ENCODE measurements at regions of chr6 and their contacts with region 1.

Region 1: DNA sequence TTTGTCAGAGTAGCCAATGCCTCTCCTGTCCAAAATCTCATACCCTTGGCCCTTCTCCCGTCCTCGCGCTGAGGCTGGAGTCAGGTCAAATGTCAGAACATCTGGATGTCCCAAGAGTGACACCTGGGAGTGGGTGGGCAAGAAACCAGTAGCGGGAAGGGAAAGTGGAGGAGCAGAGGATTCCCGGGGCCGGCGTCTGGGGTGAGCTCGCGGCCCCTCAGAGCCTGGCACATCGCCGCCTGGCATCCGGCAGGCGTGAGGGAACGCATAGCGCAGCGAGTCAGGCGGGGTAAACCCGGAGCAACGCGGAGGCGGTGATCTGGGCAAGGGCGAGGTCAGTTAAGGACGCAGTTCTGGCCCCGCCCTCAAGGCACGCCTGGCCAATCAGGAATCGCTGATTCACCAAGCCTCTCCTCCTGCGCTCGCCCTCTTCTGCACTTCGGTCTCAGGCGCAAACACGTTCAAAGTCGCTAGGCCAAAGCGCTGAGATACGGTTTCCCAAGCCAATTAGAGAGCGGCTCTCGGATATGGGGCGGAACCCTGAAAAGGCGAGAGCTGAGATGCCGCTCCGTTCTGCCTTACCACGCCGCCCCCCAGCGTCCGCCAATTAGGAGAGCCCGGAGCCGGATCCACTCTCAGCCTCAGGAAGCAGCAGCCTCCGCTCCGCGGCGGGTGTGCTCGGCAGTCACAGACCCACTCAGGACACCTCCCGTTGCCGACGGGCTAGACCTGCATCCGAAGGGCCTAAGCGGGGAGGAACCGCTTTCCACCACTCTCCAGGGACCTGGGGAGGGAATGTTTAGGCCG is 22.5 kb downstream of the VPS52 start:
- DNase-seq: peak; percentile 100
- H3K4me3 ChIP-seq: peak overlapping the region; percentile 18 to 69 (median 38)
- H3K27ac ChIP-seq: peak overlapping the region; percentile 72
- H3K4me1 ChIP-seq: peaks cover 23% of the 10 kb centered on the region
- H3K27me3 ChIP-seq: peaks cover 0 to 2% of the 10 kb centered on the region in 2 experiments
- CTCF ChIP-seq: peak in 1 of 2 donors; percentile 21
- POLR2A ChIP-seq: peak; percentile 93

Region 2: GRCh38 chr6:32971581-32972352 is 277.4 kb before region 1 on chr6:
- CTCF ChIA-PET with region 1: interaction called, 6 read pairs
- POLR2A ChIA-PET with region 1: interaction called, 12 read pairs
- dilution Hi-C with region 1: no loop called
- intact Hi-C with region 1: no loop called
- DNase-seq: peak; percentile 100
- H3K4me3 ChIP-seq: peak overlapping the region; percentile 83 to 96 (median 91)
- H3K27ac ChIP-seq: peak overlapping the region; percentile 99
- H3K4me1 ChIP-seq: peaks cover 29% of the 10 kb centered on the region
- H3K27me3 ChIP-seq: no peaks in the 10 kb centered on the region
- CTCF ChIP-seq: no peak
- POLR2A ChIP-seq: peak; percentile 100

Region 3: DNA sequence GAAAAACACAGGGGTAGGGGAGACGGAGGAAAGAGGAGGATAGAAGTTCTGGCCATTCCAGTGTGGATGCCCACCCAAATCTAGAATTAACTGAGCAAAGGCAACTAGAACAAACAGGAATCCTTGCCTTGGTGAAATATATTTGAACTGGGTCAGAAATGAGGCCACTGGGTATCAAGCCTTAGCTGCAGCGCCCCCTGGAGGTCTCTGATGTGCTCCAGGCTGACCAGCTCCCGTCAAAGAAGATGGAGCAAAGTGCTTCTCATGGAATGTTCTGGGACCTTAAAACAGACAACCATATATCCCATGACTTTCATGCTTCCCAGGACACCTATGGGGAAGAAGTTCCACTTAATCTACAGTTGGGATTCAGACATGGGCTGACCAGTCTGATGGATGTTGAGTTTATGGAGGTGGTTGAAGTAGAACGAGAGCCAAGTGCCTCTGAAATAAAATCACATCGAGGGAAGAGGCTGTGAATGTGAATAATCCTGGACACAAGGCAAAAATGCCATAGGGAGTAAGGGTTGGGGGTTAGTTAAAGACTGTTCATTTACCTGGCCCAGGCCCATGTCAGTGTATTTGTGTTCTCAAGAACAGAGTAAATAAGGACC is 122.9 kb before region 1 on chr6:
- CTCF ChIA-PET with region 1: interaction called, 55 read pairs
- POLR2A ChIA-PET with region 1: no interaction called
- dilution Hi-C with region 1: no loop called
- intact Hi-C with region 1: loop called (anchors 1 kb)
- DNase-seq: peak; percentile 45
- H3K4me3 ChIP-seq: no peak overlapping the region
- H3K27ac ChIP-seq: no peak overlapping the region
- H3K4me1 ChIP-seq: no peaks in the 10 kb centered on the region
- H3K27me3 ChIP-seq: peaks cover 21 to 31% of the 10 kb centered on the region in 2 experiments
- CTCF ChIP-seq: peak; percentile 74 to 83
- POLR2A ChIP-seq: no peak

Region 4: DNA sequence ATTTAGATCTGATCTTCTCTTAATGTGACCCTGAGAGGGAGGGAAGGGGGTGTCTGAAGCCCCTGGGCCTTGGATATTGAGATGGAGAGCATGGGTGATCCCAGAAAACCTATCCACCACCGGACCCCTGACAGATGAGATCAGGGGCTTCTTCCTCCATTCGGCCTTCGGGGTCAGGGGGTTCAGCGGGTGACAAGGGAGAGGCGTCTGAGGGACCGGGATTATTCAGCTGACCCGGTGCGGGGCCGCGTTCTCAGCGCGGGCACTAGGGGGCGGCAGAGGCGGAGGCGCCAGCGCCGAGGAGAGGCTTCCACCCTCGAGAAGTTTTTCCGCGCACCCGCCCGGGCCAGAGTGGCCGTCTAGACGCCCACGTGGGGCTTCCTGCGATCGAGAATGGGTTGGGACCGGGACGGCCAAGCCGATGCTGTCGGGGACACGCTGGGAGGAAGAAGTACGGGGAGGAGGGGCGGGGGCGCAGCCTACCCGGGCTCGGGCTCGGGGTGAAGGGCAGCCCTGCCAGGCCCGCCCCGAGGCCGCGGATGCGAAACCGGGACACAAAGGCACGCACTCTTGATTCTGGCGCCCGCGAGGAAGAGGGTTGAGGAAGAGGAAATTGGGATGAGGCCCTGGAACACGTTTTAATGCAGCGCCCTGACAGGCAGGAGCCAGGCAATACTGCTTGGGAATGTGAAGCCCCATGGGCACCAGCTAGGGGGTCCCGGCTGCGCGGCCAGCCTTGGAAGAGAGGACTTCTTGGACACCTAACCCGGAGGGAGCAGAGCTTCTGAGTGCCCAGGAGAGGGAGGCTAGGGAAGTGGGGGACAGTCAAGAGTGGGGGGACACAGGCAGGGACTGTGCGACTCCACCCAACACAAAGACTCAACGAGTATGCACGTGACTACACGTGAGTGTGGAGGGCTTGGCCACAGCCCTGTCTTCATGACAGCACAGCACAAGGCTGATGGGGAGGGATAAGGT is 87.5 kb before region 1 on chr6:
- CTCF ChIA-PET with region 1: interaction called, 99 read pairs
- POLR2A ChIA-PET with region 1: no interaction called
- dilution Hi-C with region 1: no loop called
- intact Hi-C with region 1: loop called (anchors 1 kb)
- DNase-seq: peak; percentile 63
- H3K4me3 ChIP-seq: peak overlapping the region; percentile 25 to 31 (median 30)
- H3K27ac ChIP-seq: no peak overlapping the region
- H3K4me1 ChIP-seq: no peaks in the 10 kb centered on the region
- H3K27me3 ChIP-seq: no peaks in the 10 kb centered on the region
- CTCF ChIP-seq: peak; percentile 94 to 98
- POLR2A ChIP-seq: no peak

Region 5: DNA sequence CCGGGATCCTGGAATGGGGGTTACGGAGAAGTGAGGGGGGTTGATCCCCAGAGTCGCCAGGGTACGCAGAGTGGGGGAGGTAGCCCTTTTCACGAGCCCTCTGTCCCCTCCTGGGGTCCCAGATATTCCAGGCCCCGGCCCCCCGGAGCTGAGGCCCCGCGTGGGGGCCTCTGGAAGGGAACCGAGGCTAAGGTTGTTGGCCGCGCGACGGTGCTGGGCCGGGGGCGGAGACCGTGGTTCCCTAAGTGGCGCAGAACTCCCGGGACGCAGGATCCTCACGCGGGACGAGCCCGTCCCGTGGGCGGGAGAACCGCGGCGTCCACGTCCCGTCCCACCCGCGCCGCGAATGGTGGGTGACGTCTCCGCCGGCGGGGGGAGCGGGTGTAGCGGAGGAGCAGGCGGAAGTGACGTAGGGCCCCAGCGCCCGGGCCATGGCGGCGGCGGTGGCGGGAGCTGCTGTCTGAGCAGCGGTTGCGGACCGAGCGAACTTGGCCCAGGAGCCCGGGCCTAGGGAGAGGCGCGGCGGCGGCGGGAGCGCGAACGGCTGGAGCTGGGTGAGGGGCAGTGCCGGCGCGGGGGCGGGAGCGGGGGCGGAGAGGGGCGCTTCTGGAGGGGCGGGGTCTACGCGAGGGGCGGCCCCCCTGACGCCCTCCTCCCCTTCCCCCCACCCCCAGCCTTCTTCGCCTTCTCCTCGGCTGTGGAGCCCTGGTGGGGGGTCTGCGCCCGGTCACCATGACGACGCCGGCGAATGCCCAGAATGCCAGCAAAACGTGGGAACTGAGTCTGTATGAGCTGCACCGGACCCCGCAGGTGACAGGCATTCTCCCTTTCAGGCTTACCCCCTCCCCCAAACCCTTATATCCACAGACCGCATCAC is 40.8 kb before region 1 on chr6 and contains the start of gene RING1:
- CTCF ChIA-PET with region 1: interaction called, 29 read pairs
- POLR2A ChIA-PET with region 1: interaction called, 4 read pairs
- dilution Hi-C with region 1: no loop called
- intact Hi-C with region 1: loop called (anchors 1 kb)
- DNase-seq: peak; percentile 79
- H3K4me3 ChIP-seq: peak within 1 kb of the TSS; percentile 83 to 85 (median 85)
- H3K27ac ChIP-seq: peak within 1 kb of the TSS; percentile 95
- H3K4me1 ChIP-seq: peaks cover 28% of the 10 kb centered on the region
- H3K27me3 ChIP-seq: peaks cover 2 to 5% of the 10 kb centered on the region in 2 experiments
- CTCF ChIP-seq: no peak
- POLR2A ChIP-seq: peak; percentile 93
- total RNA-seq, gene RING1: 26.8 and 28.0 TPM in 2 replicates

Region 6: GRCh38 chr6:33271458-33272274 is 22.5 kb after region 1 on chr6 and contains the starts of genes RPS18 and VPS52:
- CTCF ChIA-PET with region 1: interaction called, 9 read pairs
- POLR2A ChIA-PET with region 1: interaction called, 10 read pairs
- dilution Hi-C with region 1: no loop called
- intact Hi-C with region 1: loop called (anchors 1 kb)
- DNase-seq: peak; percentile 99
- H3K4me3 ChIP-seq: peak within 1 kb of the TSS; percentile 83 to 96 (median 86)
- H3K27ac ChIP-seq: peak within 1 kb of the TSS; percentile 85
- H3K4me1 ChIP-seq: peaks cover 47% of the 10 kb centered on the region
- H3K27me3 ChIP-seq: no peaks in the 10 kb centered on the region
- CTCF ChIP-seq: no peak
- POLR2A ChIP-seq: peak; percentile 99
- total RNA-seq, gene RPS18: 2,193 and 2,336 TPM in 2 replicates
- total RNA-seq, gene VPS52: 43.8 and 49.2 TPM in 2 replicates

Region 7: GRCh38 chr6:33458676-33459075 is 209.5 kb after region 1 on chr6:
- CTCF ChIA-PET with region 1: no interaction called
- POLR2A ChIA-PET with region 1: no interaction called
- dilution Hi-C with region 1: no loop called
- intact Hi-C with region 1: no loop called
- DNase-seq: no peak
- H3K4me3 ChIP-seq: no peak overlapping the region
- H3K27ac ChIP-seq: no peak overlapping the region
- H3K4me1 ChIP-seq: peaks cover 3% of the 10 kb centered on the region
- H3K27me3 ChIP-seq: peaks cover 0 to 4% of the 10 kb centered on the region in 2 experiments
- CTCF ChIP-seq: no peak
- POLR2A ChIP-seq: no peak